ENCODE measurements at regions of chr6 and their contacts with region 1.

Region 1: GRCh38 chr6:93079061-93079460 is 340.3 kb downstream of the EPHA7 start:
- DNase-seq: no peak
- H3K4me3 ChIP-seq: no peak overlapping the region
- H3K27ac ChIP-seq: no peak overlapping the region
- H3K4me1 ChIP-seq: no peaks in the 10 kb centered on the region
- H3K27me3 ChIP-seq: no peaks in the 10 kb centered on the region
- CTCF ChIP-seq: no peak
- EP300 ChIP-seq: no peak
- POLR2A ChIP-seq: no peak

Region 2: GRCh38 chr6:92122746-92123145 is 956.3 kb before region 1 on chr6:
- intact Hi-C with region 1: no loop called
- DNase-seq: no peak
- H3K4me3 ChIP-seq: no peak overlapping the region
- H3K27ac ChIP-seq: no peak overlapping the region
- H3K4me1 ChIP-seq: no peaks in the 10 kb centered on the region
- H3K27me3 ChIP-seq: no peaks in the 10 kb centered on the region
- CTCF ChIP-seq: no peak
- EP300 ChIP-seq: no peak
- POLR2A ChIP-seq: no peak

Region 3: GRCh38 chr6:92930171-92930570 is 148.9 kb before region 1 on chr6:
- intact Hi-C with region 1: no loop called
- DNase-seq: no peak
- H3K4me3 ChIP-seq: no peak overlapping the region
- H3K27ac ChIP-seq: no peak overlapping the region
- H3K4me1 ChIP-seq: no peaks in the 10 kb centered on the region
- H3K27me3 ChIP-seq: no peaks in the 10 kb centered on the region
- CTCF ChIP-seq: no peak
- EP300 ChIP-seq: no peak
- POLR2A ChIP-seq: no peak

Region 4: GRCh38 chr6:93040375-93040774 is 38.7 kb before region 1 on chr6:
- intact Hi-C with region 1: loop called in 1 of 4 experiments (anchors 1 kb)
- DNase-seq: no peak
- H3K4me3 ChIP-seq: no peak overlapping the region
- H3K27ac ChIP-seq: no peak overlapping the region
- H3K4me1 ChIP-seq: no peaks in the 10 kb centered on the region
- H3K27me3 ChIP-seq: no peaks in the 10 kb centered on the region
- CTCF ChIP-seq: no peak
- EP300 ChIP-seq: no peak
- POLR2A ChIP-seq: no peak

Region 5: DNA sequence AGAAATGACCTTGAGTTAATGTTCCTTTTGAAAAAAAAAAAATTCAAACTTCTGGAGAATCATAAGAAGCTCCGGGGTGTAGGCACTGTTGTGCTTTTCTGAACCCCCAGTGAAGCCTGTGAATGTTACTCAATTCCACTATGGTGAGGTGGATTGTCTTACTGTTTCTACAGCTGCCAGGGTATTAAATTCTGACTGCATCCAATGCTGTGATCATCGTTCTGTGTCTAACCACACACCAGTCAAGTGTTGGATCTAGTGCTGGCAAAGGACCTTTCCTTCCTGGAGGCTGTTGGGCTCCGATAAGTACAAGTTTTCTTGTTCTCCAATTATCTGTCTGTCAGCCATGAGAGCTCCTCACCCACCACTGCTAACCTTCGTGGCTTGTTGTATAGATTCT is 502.3 kb after region 1 on chr6:
- intact Hi-C with region 1: no loop called
- DNase-seq: no peak
- H3K4me3 ChIP-seq: no peak overlapping the region
- H3K27ac ChIP-seq: no peak overlapping the region
- H3K4me1 ChIP-seq: no peaks in the 10 kb centered on the region
- H3K27me3 ChIP-seq: no peaks in the 10 kb centered on the region
- CTCF ChIP-seq: no peak
- EP300 ChIP-seq: no peak
- POLR2A ChIP-seq: no peak

Measured in ovary (tissue), 10 donors.